ENCODE measurements at regions of chr2 and their contacts with region 1.

Region 1: DNA sequence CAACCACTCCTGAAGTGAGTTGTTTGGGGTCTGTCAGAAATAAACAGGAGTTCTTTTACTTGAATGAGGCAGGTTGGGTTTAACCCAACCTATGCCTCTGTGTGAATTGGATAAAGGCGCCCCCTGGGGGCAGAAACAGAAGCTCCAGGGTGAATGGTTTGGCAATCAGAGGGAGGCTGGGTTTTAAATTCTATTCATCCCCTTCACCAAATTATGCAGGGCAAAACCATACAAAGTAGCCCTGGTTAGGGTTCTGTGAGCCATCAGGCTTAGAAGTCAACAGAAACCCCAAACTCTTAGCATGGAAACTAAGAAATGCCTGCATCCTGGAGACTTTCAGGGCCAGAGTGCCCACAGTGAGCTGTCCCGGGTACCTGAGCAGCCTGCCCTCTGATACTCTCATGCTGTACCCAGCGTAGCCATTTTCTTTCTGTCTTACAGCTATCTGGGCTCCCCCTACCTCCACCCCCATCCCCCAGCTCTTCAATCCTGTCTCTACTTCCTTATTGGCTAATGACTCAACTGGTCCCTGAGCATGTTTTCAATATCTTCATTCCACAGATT is 241.5 kb downstream of the ICOS start:
- DNase-seq: peak; percentile 28
- CTCF ChIP-seq: peak; percentile 61

Region 2: GRCh38 chr2:204024503-204024902 is 153.6 kb before region 1 on chr2:
- CTCF ChIA-PET with region 1: interaction called, 41 read pairs
- POLR2A ChIA-PET with region 1: no interaction called
- DNase-seq: no peak
- CTCF ChIP-seq: peak; percentile 61

Region 3: DNA sequence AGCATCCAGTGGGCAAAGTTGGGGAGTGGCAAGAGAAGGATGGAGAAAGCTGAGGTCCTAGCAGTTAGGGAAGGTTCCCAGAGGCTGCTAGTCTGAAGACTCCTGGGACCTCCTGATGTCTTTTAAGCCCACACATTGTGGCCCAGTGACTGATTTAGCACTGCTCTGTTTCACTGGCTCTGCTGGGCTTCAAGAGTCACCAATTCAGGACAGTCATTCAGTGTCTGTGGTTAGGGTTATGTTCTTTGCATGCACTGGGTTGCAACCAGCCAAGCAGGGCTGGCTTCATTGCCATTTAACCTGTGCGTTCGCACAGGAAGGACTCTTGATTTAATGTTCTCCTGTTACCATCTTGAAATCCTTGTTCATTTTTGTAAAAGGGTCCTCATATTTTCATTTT is 42.3 kb before region 1 on chr2:
- CTCF ChIA-PET with region 1: interaction called, 15 read pairs
- POLR2A ChIA-PET with region 1: no interaction called
- DNase-seq: no peak
- CTCF ChIP-seq: no peak

Region 4: GRCh38 chr2:204150721-204151120 is 27.3 kb before region 1 on chr2:
- CTCF ChIA-PET with region 1: interaction called, 35 read pairs
- POLR2A ChIA-PET with region 1: no interaction called
- DNase-seq: no peak
- CTCF ChIP-seq: no peak

Region 5: DNA sequence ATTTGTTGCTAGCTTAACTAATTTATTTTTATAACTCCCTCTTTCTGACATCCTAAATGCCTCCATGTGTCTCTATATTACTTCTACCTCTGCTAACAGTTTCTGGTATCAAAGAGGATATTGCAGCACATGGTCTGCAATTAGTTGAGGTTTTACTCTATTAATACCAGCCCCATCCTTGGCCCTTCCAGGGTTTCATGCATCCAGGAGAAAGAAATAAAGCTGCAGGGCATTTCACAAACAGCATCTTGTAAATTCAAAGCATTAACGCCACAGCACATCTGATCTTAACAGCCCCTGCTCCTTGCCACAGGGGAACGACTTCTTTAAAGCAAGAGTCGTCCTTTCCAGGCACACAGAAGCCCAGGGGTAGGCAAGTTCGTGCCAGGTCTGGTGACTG is 17.4 kb after region 1 on chr2:
- CTCF ChIA-PET with region 1: interaction called, 17 read pairs
- POLR2A ChIA-PET with region 1: no interaction called
- DNase-seq: no peak
- CTCF ChIP-seq: no peak

Measured in GM10248 (cell line).